ENCODE measurements at regions of chr6 and their contacts with region 1.

Region 1: GRCh38 chr6:6856538-6857523 is 250.9 kb upstream of the RREB1 start:
- DNase-seq: peak; percentile 80 to 92
- H3K4me3 ChIP-seq: peak overlapping the region; percentile 40; the same call in 1 of the 2 replicates
- H3K27ac ChIP-seq: peak overlapping the region; percentile 96
- H3K4me1 ChIP-seq: peaks cover 32% of the 10 kb centered on the region
- H3K27me3 ChIP-seq: no peaks in the 10 kb centered on the region
- CTCF ChIP-seq: no peak

Region 2: GRCh38 chr6:6749702-6750491 is 106.9 kb before region 1 on chr6:
- CTCF ChIA-PET with region 1: no interaction called
- POLR2A ChIA-PET with region 1: no interaction called
- intact Hi-C with region 1: loop called (anchors 1 kb)
- DNase-seq: peak; percentile 68 to 74
- H3K4me3 ChIP-seq: no peak overlapping the region
- H3K27ac ChIP-seq: peak overlapping the region; percentile 58
- H3K4me1 ChIP-seq: peaks cover 32% of the 10 kb centered on the region
- H3K27me3 ChIP-seq: no peaks in the 10 kb centered on the region
- CTCF ChIP-seq: no peak

Region 3: GRCh38 chr6:6803572-6803971 is 53.3 kb before region 1 on chr6:
- CTCF ChIA-PET with region 1: no interaction called
- POLR2A ChIA-PET with region 1: interaction called, 14 read pairs
- intact Hi-C with region 1: no loop called
- DNase-seq: peak; percentile 94 to 97
- H3K4me3 ChIP-seq: no peak overlapping the region
- H3K27ac ChIP-seq: peak overlapping the region; percentile 98
- H3K4me1 ChIP-seq: peaks cover 29% of the 10 kb centered on the region
- H3K27me3 ChIP-seq: no peaks in the 10 kb centered on the region
- CTCF ChIP-seq: no peak

Region 4: GRCh38 chr6:6811151-6812002 is 45.5 kb before region 1 on chr6:
- CTCF ChIA-PET with region 1: no interaction called
- POLR2A ChIA-PET with region 1: no interaction called
- intact Hi-C with region 1: loop called (anchors 2 kb)
- DNase-seq: peak; percentile 72 to 93
- H3K4me3 ChIP-seq: peak overlapping the region; percentile 54
- H3K27ac ChIP-seq: peak overlapping the region; percentile 95
- H3K4me1 ChIP-seq: peaks cover 37% of the 10 kb centered on the region
- H3K27me3 ChIP-seq: no peaks in the 10 kb centered on the region
- CTCF ChIP-seq: no peak

Region 5: DNA sequence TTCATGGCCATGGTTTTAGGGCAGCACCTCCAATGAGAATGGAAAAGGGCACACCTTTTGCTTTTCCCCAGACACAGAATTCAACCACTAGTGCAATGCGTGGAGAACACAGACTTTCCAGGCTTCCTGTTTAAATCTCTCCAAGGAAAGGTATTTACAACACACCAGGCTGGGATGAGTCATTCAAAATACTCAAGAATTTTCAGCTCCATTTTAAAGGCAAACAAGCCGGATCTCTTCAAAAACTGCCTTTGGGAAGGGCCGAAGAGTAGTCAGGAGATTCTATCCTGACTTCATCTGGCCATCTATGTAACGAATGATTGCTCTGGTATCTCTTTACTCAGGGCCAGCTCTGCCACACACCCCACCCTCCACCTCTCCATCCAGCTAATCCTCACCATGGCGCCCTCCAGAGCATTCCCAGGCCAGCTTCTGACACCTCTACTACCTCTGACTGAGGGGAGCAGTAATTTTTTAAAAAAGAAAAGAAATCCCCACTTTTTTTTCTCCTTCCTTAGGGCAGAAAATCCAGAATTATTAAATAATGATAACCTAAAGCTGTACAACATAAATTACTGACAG is 13.7 kb before region 1 on chr6:
- CTCF ChIA-PET with region 1: interaction called, 3 read pairs
- POLR2A ChIA-PET with region 1: interaction called, 15 read pairs
- intact Hi-C with region 1: no loop called
- DNase-seq: peak; percentile 31 to 70
- H3K4me3 ChIP-seq: no peak overlapping the region
- H3K27ac ChIP-seq: peak overlapping the region; percentile 68
- H3K4me1 ChIP-seq: peaks cover 14% of the 10 kb centered on the region
- H3K27me3 ChIP-seq: no peaks in the 10 kb centered on the region
- CTCF ChIP-seq: no peak

Region 6: DNA sequence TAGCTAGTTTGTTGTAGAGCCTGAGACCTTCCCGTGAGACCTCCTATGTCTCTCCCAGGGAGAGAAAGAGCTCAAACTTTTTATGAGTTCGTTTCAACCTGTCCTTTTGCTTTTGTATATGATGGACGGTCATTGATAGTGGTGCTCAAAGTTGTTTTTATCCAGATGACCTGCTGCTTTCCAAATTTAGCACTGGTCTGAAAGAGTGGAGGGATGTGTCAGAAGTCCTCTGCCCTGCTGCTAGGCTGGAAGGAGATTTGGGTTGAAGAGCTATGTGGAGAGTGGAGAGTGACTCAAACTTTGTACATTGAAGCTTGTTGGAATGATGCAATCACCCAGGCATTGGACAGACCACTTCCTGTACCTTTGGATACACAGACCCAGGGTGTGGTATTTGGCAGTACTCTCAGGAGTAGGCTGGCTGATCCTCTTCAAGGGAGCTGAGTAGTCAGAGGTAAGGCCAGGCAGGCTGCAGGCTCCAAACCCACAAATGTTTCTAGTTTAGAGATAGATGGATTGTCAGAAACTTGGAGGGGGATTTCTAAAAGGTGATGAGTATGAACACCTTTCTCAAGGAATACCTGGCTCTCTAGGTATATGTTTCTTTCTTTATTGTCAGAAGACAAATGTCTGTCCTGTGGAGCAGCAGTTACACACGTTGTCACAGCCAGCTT is 201.6 kb after region 1 on chr6:
- CTCF ChIA-PET with region 1: interaction called, 13 read pairs
- POLR2A ChIA-PET with region 1: no interaction called
- intact Hi-C with region 1: loop called (anchors 2 kb)
- DNase-seq: peak; percentile 82 to 95
- H3K4me3 ChIP-seq: no peak overlapping the region
- H3K27ac ChIP-seq: peak overlapping the region; percentile 87
- H3K4me1 ChIP-seq: peaks cover 48% of the 10 kb centered on the region
- H3K27me3 ChIP-seq: no peaks in the 10 kb centered on the region
- CTCF ChIP-seq: no peak

Measured in PC-9 (cell line).